Caco-2 (cell line): ENCODE measurements at regions of chr6 and their contacts with region 1.

Region 1: DNA sequence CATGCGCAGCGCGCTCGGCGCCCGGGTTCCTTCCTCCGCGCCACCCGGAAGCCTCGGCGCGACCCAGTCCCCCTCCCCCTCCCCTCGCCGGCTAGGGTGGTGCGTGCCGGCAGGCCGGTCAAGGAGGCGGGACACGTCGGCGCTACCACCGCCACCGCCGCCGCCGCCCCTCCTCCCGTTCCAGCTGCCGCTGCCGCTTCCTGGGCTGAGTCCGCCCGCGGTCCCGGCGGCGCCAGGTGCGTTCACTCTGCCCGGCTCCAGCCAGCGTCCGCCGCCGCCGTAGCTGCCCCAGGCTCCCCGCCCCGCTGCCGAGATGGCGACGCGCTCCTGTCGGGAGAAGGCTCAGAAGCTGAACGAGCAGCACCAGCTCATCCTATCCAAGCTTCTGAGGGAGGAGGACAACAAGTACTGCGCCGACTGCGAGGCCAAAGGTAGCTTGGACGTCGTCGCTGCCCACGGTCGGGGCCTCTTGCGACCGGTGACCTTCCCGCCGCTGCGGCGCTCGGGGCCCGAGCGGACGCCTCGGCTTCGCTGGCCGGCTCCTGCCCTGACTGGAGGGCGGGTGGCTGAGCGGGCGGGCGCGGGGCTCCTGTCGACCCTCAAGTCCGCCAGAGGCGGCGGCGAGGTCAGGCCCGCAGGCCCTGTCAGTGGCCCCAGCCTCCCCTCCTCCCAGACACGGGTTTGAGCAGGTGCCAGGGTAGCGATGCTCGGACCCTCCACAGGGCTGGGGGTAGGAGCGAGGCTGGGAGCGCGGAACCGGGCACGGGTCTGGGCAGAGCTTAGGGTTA is at the start of gene SMAP1:
- DNase-seq: peak; percentile 94 to 97
- H3K4me3 ChIP-seq: peak within 1 kb of the TSS; percentile 96
- H3K4me3 Mint-ChIP-seq: peak within 1 kb of the TSS; percentile 82
- H3K27ac Mint-ChIP-seq: peak within 1 kb of the TSS; percentile 74
- H3K4me1 ChIP-seq: peaks cover 14% of the 10 kb centered on the region
- H3K4me1 Mint-ChIP-seq: peaks cover 13% of the 10 kb centered on the region
- H3K27me3 ChIP-seq: no peaks in the 10 kb centered on the region
- H3K27me3 Mint-ChIP-seq: no peaks in the 10 kb centered on the region
- CTCF ChIP-seq: no peak
- total RNA-seq, gene SMAP1: 36.1 and 36.2 TPM in 2 replicates

Region 2: DNA sequence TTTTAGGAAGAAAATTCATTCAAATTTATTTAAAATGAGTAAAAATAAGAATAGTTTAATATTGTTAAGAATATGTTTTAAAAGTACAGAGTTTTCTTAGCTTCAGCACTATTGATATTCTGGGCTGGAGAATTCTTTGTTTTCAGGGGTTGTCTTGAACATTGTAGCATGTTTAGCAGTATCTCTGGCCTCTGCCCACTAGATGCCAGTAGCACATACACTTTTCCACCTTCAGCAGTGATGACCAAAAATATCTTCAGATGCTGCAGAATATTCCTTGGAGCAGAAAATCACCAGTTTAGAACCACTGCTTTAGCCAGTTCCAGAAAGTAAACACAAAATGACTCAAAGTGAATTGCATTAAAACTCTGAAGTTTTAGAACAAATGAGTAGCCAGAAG is 120.6 kb before region 1 on chr6:
- CTCF ChIA-PET with region 1: no interaction called
- POLR2A ChIA-PET with region 1: no interaction called
- intact Hi-C with region 1: loop called (anchors 1 kb)
- DNase-seq: no peak
- H3K4me3 ChIP-seq: no peak overlapping the region
- H3K4me3 Mint-ChIP-seq: no peak overlapping the region
- H3K27ac Mint-ChIP-seq: no peak overlapping the region
- H3K4me1 ChIP-seq: no peaks in the 10 kb centered on the region
- H3K4me1 Mint-ChIP-seq: no peaks in the 10 kb centered on the region
- H3K27me3 ChIP-seq: no peaks in the 10 kb centered on the region
- H3K27me3 Mint-ChIP-seq: no peaks in the 10 kb centered on the region
- CTCF ChIP-seq: peak; percentile 25 to 67

Region 3: GRCh38 chr6:70566751-70567382 is 101.0 kb before region 1 on chr6 and contains the start of gene SDHAF4:
- CTCF ChIA-PET with region 1: no interaction called
- POLR2A ChIA-PET with region 1: interaction called, 13 read pairs
- intact Hi-C with region 1: loop called (anchors 2 kb)
- DNase-seq: peak; percentile 94 to 96
- H3K4me3 ChIP-seq: peak within 1 kb of the TSS; percentile 90
- H3K4me3 Mint-ChIP-seq: peak within 1 kb of the TSS; percentile 84
- H3K27ac Mint-ChIP-seq: peak within 1 kb of the TSS; percentile 75
- H3K4me1 ChIP-seq: peaks cover 8% of the 10 kb centered on the region; the same call in 1 of the 2 replicates
- H3K4me1 Mint-ChIP-seq: no peaks in the 10 kb centered on the region
- H3K27me3 ChIP-seq: no peaks in the 10 kb centered on the region
- H3K27me3 Mint-ChIP-seq: no peaks in the 10 kb centered on the region
- CTCF ChIP-seq: no peak
- total RNA-seq, gene SDHAF4: 8.4 and 10.9 TPM in 2 replicates